Dorsolateral prefrontal cortex (tissue), 120 donors: ENCODE measurements at regions of chr15 and their contacts with region 1.

Region 1: GRCh38 chr15:89448825-89449224 is 47.6 kb downstream of the RHCG start:
- DNase-seq: no peak
- H3K4me3 ChIP-seq: no peak overlapping the region
- H3K27ac ChIP-seq: no peak overlapping the region
- H3K27me3 ChIP-seq: peaks cover 0 to 22% (median 0%) of the 10 kb centered on the region in 45 donors
- CTCF ChIP-seq: no peak

Region 2: DNA sequence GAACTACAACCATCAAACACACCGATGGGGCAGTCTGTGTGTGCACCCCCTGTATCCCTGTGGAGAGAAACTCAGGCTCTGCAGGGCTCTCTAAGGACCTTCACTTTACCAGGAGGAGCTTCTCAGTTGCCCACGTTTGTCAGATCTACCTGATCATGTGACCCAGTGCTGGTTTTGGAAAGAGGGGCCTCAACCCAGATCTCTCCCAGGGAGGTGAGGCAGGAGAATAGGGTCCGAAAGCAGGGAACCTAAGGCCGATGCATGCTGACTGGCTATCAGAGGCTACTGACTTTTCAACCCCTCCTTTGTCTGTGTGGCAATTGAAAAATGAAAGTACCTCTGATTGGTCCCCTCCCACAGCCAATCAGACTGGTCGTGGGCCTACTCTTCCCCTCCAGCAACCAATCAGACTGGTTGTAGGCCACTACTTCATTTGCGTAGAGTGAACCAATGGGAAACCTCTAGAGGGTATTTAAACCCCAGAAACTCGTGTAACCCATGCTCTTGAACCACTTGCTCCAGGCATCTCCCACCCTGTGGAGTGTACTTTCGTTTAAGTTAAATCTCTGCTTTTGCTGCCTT is 13.6 kb after region 1 on chr15:
- intact Hi-C with region 1: loop called in 1 of 2 experiments (anchors 1 kb)
- DNase-seq: peak in 6 of 10 donors; percentile 34 to 70 (median 53)
- H3K4me3 ChIP-seq: peak overlapping the region in 54 of 59 donors; percentile 0 to 60 (median 40)
- H3K27ac ChIP-seq: peak overlapping the region in 2 of 59 donors; percentile 13 to 53
- H3K27me3 ChIP-seq: no peaks in the 10 kb centered on the region
- CTCF ChIP-seq: no peak